ENCODE measurements at regions of chr17 and their contacts with region 1.

Region 1: DNA sequence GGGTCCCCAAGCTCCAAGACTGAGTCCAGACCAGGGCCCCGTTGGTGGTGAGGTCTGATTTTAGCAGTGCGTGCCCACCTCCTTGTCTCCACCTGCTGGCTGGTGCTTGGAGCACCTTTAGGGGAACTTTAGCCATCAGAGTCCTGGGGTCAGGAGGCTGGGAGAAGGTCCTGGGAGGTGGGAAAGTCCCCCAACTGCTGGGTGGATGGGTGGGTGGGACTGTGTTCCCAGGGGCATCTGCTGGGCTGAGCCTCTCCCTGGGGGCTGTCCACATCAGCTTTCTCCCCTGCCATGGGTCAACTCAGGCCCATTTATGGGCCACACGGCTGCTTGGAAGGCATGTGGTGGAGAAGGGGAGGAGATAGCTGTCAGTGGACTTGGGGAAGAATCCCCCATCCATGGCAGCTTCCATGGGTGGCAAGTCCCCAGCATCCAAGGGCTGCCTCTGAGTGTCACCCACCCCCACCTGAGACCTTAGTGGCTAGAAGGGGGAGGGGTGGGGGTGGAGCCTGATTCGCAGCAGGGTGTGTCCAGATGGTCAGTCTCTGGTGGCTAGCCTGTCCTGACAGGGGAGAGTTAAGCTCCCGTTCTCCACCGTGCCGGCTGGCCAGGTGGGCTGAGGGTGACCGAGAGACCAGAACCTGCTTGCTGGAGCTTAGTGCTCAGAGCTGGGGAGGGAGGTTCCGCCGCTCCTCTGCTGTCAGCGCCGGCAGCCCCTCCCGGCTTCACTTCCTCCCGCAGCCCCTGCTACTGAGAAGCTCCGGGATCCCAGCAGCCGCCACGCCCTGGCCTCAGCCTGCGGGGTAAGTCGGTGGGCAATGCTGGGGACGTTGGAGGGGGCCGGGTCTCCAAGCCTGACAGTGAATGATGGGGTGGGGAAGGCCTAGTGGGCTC is at the start of gene TRPV2:
- DNase-seq: peak; percentile 23 to 78 (median 64)
- ATAC-seq: peak; percentile 47
- H3K4me3 ChIP-seq: peak within 1 kb of the TSS; percentile 95
- H3K4me3 Mint-ChIP-seq: peak within 1 kb of the TSS; percentile 95
- H3K27ac ChIP-seq: peak within 1 kb of the TSS; percentile 85 to 97
- H3K27ac Mint-ChIP-seq: peak within 1 kb of the TSS; percentile 99
- H3K4me1 ChIP-seq: peaks cover 48% of the 10 kb centered on the region
- H3K4me1 Mint-ChIP-seq: peaks cover 52% of the 10 kb centered on the region
- H3K27me3 ChIP-seq: no peaks in the 10 kb centered on the region
- H3K27me3 Mint-ChIP-seq: no peaks in the 10 kb centered on the region
- CTCF ChIP-seq: peak; percentile 52
- total RNA-seq, gene TRPV2: 37.1 to 37.4 TPM

Region 2: DNA sequence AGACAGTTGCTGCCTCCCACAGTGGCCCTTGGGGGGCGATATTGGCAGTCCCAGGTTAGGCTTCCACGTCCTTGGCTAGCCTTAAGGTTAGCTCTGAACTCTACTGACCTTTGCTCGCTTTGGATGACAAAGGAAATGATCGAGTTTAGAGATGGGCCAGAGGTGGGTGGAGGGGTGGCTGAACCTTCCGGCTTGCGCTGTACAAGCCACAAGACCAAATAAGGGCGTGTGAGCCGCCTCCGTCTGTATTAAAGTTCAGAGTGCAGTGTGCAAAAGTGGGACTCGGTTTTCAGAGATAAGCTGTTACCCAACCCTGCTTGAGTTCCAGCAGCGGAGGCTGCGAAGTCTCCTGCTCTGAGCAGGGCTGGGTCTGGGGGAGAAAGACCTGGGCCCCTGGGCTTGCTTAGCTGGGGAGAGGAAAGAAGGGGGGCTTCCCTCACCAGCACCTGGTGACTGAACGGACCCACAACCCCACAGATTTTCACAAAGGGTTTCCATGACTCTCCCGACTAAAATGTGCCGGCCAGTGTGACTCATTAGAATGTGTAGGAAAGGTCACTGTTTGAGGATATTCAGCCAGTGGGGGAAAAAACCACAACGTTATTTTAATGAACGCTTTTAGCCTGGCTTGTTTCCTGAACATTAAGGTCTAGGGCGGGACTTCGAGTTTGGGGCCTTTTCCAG is 129.2 kb before region 1 on chr17:
- CTCF ChIA-PET with region 1: interaction called, 3 read pairs
- POLR2A ChIA-PET with region 1: interaction called, 3 read pairs
- intact Hi-C with region 1: loop called in 1 of 2 experiments (anchors 5 kb)
- DNase-seq: peak; percentile 48 to 91 (median 77)
- ATAC-seq: peak; percentile 93
- H3K4me3 ChIP-seq: peak overlapping the region; percentile 19 to 27
- H3K4me3 Mint-ChIP-seq: peak overlapping the region; percentile 75
- H3K27ac ChIP-seq: peak overlapping the region; percentile 60 to 86
- H3K27ac Mint-ChIP-seq: peak overlapping the region; percentile 99
- H3K4me1 ChIP-seq: peaks cover 49% of the 10 kb centered on the region
- H3K4me1 Mint-ChIP-seq: peaks cover 53% of the 10 kb centered on the region
- H3K27me3 ChIP-seq: no peaks in the 10 kb centered on the region
- H3K27me3 Mint-ChIP-seq: no peaks in the 10 kb centered on the region
- CTCF ChIP-seq: peak; percentile 37

Region 3: GRCh38 chr17:16380640-16381495 is 34.4 kb before region 1 on chr17 and contains the start of gene UBB:
- CTCF ChIA-PET with region 1: interaction called, 40 read pairs
- POLR2A ChIA-PET with region 1: interaction called, 30 read pairs
- intact Hi-C with region 1: loop called (anchors 1 kb)
- DNase-seq: peak; percentile 88 to 99 (median 94)
- ATAC-seq: peak; percentile 91
- H3K4me3 ChIP-seq: peak within 1 kb of the TSS; percentile 77 to 79
- H3K4me3 Mint-ChIP-seq: peak within 1 kb of the TSS; percentile 85
- H3K27ac ChIP-seq: peak within 1 kb of the TSS; percentile 89 to 99
- H3K27ac Mint-ChIP-seq: peak within 1 kb of the TSS; percentile 96
- H3K4me1 ChIP-seq: peaks cover 29% of the 10 kb centered on the region
- H3K4me1 Mint-ChIP-seq: peaks cover 36% of the 10 kb centered on the region
- H3K27me3 ChIP-seq: no peaks in the 10 kb centered on the region
- H3K27me3 Mint-ChIP-seq: no peaks in the 10 kb centered on the region
- CTCF ChIP-seq: no peak
- total RNA-seq, gene UBB: 829 to 863 TPM